ENCODE measurements at regions of chr7 and their contacts with region 1.

Region 1: GRCh38 chr7:134954197-134955082 is 31.9 kb upstream of the AGBL3 start:
- DNase-seq: peak; percentile 47
- ATAC-seq: no peak
- H3K4me3 ChIP-seq: no peak overlapping the region
- H3K4me3 Mint-ChIP-seq: no peak overlapping the region
- H3K27ac ChIP-seq: no peak overlapping the region
- H3K27ac Mint-ChIP-seq: no peak overlapping the region
- H3K4me1 ChIP-seq: no peaks in the 10 kb centered on the region
- H3K4me1 Mint-ChIP-seq: no peaks in the 10 kb centered on the region
- H3K27me3 ChIP-seq: no peaks in the 10 kb centered on the region
- H3K27me3 Mint-ChIP-seq: no peaks in the 10 kb centered on the region
- CTCF ChIP-seq: peak; percentile 73

Region 2: GRCh38 chr7:134547397-134548054 is 406.9 kb before region 1 on chr7:
- CTCF ChIA-PET with region 1: no interaction called
- POLR2A ChIA-PET with region 1: no interaction called
- intact Hi-C with region 1: loop called (anchors 10 kb)
- DNase-seq: peak; percentile 71
- ATAC-seq: peak; percentile 54
- H3K4me3 ChIP-seq: no peak overlapping the region
- H3K4me3 Mint-ChIP-seq: peak overlapping the region; percentile 49
- H3K27ac ChIP-seq: no peak overlapping the region
- H3K27ac Mint-ChIP-seq: no peak overlapping the region
- H3K4me1 ChIP-seq: peaks cover 3 to 5% of the 10 kb centered on the region in 2 donors
- H3K4me1 Mint-ChIP-seq: peaks cover 4% of the 10 kb centered on the region
- H3K27me3 ChIP-seq: no peaks in the 10 kb centered on the region
- H3K27me3 Mint-ChIP-seq: peaks cover 48% of the 10 kb centered on the region
- CTCF ChIP-seq: peak; percentile 91

Region 3: GRCh38 chr7:134605973-134606923 is 348.2 kb before region 1 on chr7:
- CTCF ChIA-PET with region 1: interaction called, 3 read pairs
- POLR2A ChIA-PET with region 1: no interaction called
- intact Hi-C with region 1: loop called (anchors 1 kb)
- DNase-seq: peak; percentile 72
- ATAC-seq: peak; percentile 71
- H3K4me3 ChIP-seq: no peak overlapping the region
- H3K4me3 Mint-ChIP-seq: no peak overlapping the region
- H3K27ac ChIP-seq: no peak overlapping the region
- H3K27ac Mint-ChIP-seq: no peak overlapping the region
- H3K4me1 ChIP-seq: peaks cover 0 to 3% of the 10 kb centered on the region in 2 donors
- H3K4me1 Mint-ChIP-seq: peaks cover 3% of the 10 kb centered on the region
- H3K27me3 ChIP-seq: peaks cover 0 to 13% (median 2%) of the 10 kb centered on the region in 4 experiments
- H3K27me3 Mint-ChIP-seq: peaks cover 43% of the 10 kb centered on the region
- CTCF ChIP-seq: peak; percentile 94

Region 4: GRCh38 chr7:134651991-134652390 is 302.4 kb before region 1 on chr7:
- CTCF ChIA-PET with region 1: no interaction called
- POLR2A ChIA-PET with region 1: no interaction called
- intact Hi-C with region 1: no loop called
- DNase-seq: no peak
- ATAC-seq: no peak
- H3K4me3 ChIP-seq: no peak overlapping the region
- H3K4me3 Mint-ChIP-seq: no peak overlapping the region
- H3K27ac ChIP-seq: no peak overlapping the region
- H3K27ac Mint-ChIP-seq: no peak overlapping the region
- H3K4me1 ChIP-seq: peaks cover 6 to 16% of the 10 kb centered on the region in 2 donors
- H3K4me1 Mint-ChIP-seq: peaks cover 23% of the 10 kb centered on the region
- H3K27me3 ChIP-seq: no peaks in the 10 kb centered on the region
- H3K27me3 Mint-ChIP-seq: no peaks in the 10 kb centered on the region
- CTCF ChIP-seq: no peak

Region 5: GRCh38 chr7:134686786-134687185 is 267.7 kb before region 1 on chr7:
- CTCF ChIA-PET with region 1: interaction called, 3 read pairs
- POLR2A ChIA-PET with region 1: no interaction called
- intact Hi-C with region 1: loop called (anchors 5 kb)
- DNase-seq: no peak
- ATAC-seq: no peak
- H3K4me3 ChIP-seq: no peak overlapping the region
- H3K4me3 Mint-ChIP-seq: no peak overlapping the region
- H3K27ac ChIP-seq: no peak overlapping the region
- H3K27ac Mint-ChIP-seq: no peak overlapping the region
- H3K4me1 ChIP-seq: no peaks in the 10 kb centered on the region
- H3K4me1 Mint-ChIP-seq: no peaks in the 10 kb centered on the region
- H3K27me3 ChIP-seq: peaks cover 0 to 4% (median 0%) of the 10 kb centered on the region in 4 experiments
- H3K27me3 Mint-ChIP-seq: peaks cover 21% of the 10 kb centered on the region
- CTCF ChIP-seq: no peak

Measured in B cell (primary cell).